GM12878 (cell line): ENCODE measurements at regions of chrX and their contacts with region 1.

Region 1: DNA sequence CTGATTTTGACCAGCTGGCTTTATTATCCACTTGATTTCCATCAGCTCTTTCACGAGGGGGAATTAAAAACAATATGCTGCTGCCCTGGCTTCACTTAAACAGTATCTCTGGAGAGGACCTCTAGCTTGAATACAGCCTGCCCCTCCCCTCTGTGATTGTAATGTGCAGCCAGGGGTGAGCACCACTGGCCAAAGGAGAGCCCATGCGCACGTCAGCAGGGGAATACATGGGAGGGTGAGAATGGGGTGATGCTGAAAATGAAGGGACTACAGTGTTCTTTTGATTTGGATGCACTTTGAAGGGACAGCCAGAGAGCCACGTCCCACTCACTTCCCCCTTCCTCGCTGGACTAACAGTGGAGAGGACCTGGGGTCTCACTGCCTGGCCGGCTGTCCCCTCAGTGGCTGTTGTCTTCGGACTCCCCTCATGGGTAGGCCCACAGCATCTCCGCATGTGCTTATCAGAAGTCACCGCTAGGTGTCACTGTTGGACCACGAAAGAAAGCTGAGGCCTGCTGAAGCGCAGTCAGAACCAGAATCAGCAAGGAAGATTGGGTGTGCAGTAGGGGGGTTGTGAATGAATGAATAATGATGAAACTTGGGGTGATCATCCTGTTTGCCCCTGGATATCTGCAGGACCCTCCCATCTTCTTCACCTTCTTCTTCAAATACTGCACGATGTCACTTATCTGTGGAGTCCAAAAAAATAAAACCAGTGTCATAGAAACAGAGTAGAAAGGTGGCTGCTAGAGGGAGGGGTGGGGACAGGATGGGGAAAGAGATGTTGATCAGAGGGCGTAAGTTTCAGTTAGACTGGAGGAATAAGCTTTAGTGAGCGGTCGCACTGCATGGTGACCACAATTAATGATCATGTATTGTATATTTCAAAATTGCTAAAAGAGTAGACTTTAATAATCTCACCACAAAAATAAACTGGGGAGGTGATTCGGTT is 32.8 kb downstream of the CLCN4 start:
- DNase-seq: no peak
- ATAC-seq: peak; percentile 98
- H3K4me3 ChIP-seq: no peak overlapping the region
- H3K27ac ChIP-seq: no peak overlapping the region
- H3K4me1 ChIP-seq: no peaks in the 10 kb centered on the region
- H3K27me3 ChIP-seq: no peaks in the 10 kb centered on the region; a peak in 1 of 4 replicates
- CTCF ChIP-seq: peak; percentile 74 to 94 (median 81)
- EP300 ChIP-seq: no peak
- POLR2A ChIP-seq: no peak
- RAD21 ChIP-seq: peak; percentile 93

Region 2: GRCh38 chrX:9988762-9989161 is 200.8 kb before region 1 on chrX:
- CTCF ChIA-PET with region 1: interaction called, 10 read pairs
- POLR2A ChIA-PET with region 1: no interaction called
- RAD21 ChIA-PET with region 1: no interaction called
- SMC1A ChIA-PET with region 1: no interaction called
- in situ Hi-C with region 1: no loop called
- intact Hi-C with region 1: no loop called
- DNase-seq: no peak
- ATAC-seq: peak; percentile 52
- H3K4me3 ChIP-seq: no peak overlapping the region
- H3K27ac ChIP-seq: no peak overlapping the region
- H3K4me1 ChIP-seq: no peaks in the 10 kb centered on the region
- H3K27me3 ChIP-seq: no peaks in the 10 kb centered on the region
- CTCF ChIP-seq: peak; percentile 43 to 71 (median 44); a peak in 4 of 6 replicates
- EP300 ChIP-seq: no peak
- POLR2A ChIP-seq: no peak
- RAD21 ChIP-seq: peak; percentile 69

Region 3: DNA sequence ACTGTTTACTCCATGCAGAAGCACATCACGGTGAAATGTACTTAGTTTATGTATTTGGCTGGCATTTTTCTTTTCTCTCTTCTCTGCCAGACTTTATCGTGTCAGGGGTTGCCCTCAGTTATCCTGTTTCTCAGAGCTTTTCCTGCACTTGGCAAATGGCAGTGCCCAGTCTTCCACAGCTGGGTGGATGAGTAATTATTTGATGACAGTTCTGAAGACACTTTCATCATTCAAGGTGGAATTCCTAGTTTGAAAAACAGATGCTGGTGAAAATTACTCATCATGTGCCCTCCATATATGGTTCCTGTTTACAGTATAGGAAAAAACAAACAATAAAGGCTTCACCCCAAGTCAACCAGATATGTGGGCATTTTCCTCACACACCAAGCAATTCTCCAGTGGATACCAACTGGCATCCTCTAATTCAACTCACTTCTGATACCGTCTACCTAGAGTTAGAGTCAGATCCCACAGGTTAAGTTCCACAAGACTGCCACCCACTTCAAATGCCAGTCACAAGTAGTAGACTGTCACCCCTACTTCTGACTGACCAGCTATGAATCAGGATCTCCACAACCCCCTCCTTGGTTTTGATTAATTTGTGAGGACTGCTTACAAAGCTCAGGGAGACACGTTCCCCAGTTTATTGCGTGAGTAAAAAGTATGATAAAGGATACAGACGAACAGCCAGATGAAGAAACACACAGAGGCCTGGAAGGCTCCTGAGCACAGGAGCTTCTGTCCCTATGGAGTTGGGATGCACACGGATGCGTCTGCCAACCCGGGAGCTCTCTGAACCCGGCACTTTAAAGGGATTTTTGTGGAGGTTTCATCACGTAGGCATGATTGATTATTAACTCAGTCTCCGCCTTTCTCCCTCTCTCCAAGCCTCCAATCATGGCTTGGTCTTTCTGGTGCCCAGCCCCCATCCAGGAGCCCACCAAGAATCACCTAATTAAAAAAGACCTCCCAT is 149.5 kb before region 1 on chrX:
- CTCF ChIA-PET with region 1: no interaction called
- POLR2A ChIA-PET with region 1: no interaction called
- RAD21 ChIA-PET with region 1: no interaction called
- SMC1A ChIA-PET with region 1: no interaction called
- in situ Hi-C with region 1: no loop called
- intact Hi-C with region 1: no loop called
- DNase-seq: no peak
- ATAC-seq: no peak
- H3K4me3 ChIP-seq: no peak overlapping the region
- H3K27ac ChIP-seq: no peak overlapping the region
- H3K4me1 ChIP-seq: no peaks in the 10 kb centered on the region
- H3K27me3 ChIP-seq: no peaks in the 10 kb centered on the region; a peak in 1 of 4 replicates
- CTCF ChIP-seq: no peak
- EP300 ChIP-seq: no peak
- POLR2A ChIP-seq: no peak
- RAD21 ChIP-seq: no peak

Region 4: GRCh38 chrX:10208281-10208856 is 18.8 kb after region 1 on chrX:
- CTCF ChIA-PET with region 1: interaction called, 20 read pairs
- POLR2A ChIA-PET with region 1: no interaction called
- RAD21 ChIA-PET with region 1: interaction called, 6 read pairs
- SMC1A ChIA-PET with region 1: interaction called, 5 read pairs
- in situ Hi-C with region 1: no loop called
- intact Hi-C with region 1: no loop called
- DNase-seq: no peak
- ATAC-seq: no peak
- H3K4me3 ChIP-seq: no peak overlapping the region
- H3K27ac ChIP-seq: no peak overlapping the region
- H3K4me1 ChIP-seq: no peaks in the 10 kb centered on the region
- H3K27me3 ChIP-seq: no peaks in the 10 kb centered on the region
- CTCF ChIP-seq: no peak
- EP300 ChIP-seq: no peak
- POLR2A ChIP-seq: no peak
- RAD21 ChIP-seq: no peak

Region 5: DNA sequence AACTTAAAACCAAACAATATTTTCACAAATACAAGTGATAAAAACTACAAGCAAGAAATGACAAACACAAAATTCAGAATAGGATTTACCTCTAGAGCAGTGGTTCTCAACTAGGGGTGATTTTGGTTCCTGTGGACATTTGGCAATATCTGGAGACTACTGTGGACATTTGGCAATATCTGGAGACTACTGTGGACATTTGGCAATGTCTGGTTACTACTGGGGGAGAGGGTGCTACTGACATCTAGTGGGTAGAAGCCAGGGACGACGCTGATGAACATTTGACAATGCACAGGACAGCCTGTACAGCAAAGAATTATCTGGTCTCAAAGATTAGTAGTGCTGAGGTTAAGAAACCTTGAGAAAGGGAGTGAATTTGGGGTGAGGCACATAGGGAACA is 137.0 kb after region 1 on chrX:
- CTCF ChIA-PET with region 1: interaction called, 6 read pairs
- POLR2A ChIA-PET with region 1: no interaction called
- RAD21 ChIA-PET with region 1: interaction called, 4 read pairs
- SMC1A ChIA-PET with region 1: interaction called, 3 read pairs
- in situ Hi-C with region 1: loop called (anchors 10 kb)
- intact Hi-C with region 1: loop called (anchors 1 kb)
- DNase-seq: no peak
- ATAC-seq: peak; percentile 80
- H3K4me3 ChIP-seq: no peak overlapping the region
- H3K27ac ChIP-seq: no peak overlapping the region
- H3K4me1 ChIP-seq: no peaks in the 10 kb centered on the region
- H3K27me3 ChIP-seq: no peaks in the 10 kb centered on the region; a peak in 2 of 4 replicates
- CTCF ChIP-seq: peak; percentile 11 to 36 (median 21); a peak in 2 of 6 replicates
- EP300 ChIP-seq: no peak
- POLR2A ChIP-seq: no peak
- RAD21 ChIP-seq: peak; percentile 49

Region 6: GRCh38 chrX:10597871-10598270 is 408.3 kb after region 1 on chrX:
- CTCF ChIA-PET with region 1: interaction called, 93 read pairs
- POLR2A ChIA-PET with region 1: no interaction called
- RAD21 ChIA-PET with region 1: interaction called, 33 read pairs
- SMC1A ChIA-PET with region 1: interaction called, 51 read pairs
- in situ Hi-C with region 1: no loop called
- intact Hi-C with region 1: loop called (anchors 1 kb)
- DNase-seq: no peak
- ATAC-seq: peak; percentile 81
- H3K4me3 ChIP-seq: no peak overlapping the region
- H3K27ac ChIP-seq: no peak overlapping the region
- H3K4me1 ChIP-seq: no peaks in the 10 kb centered on the region
- H3K27me3 ChIP-seq: no peaks in the 10 kb centered on the region
- CTCF ChIP-seq: peak; percentile 56 to 59 (median 56); a peak in 5 of 6 replicates
- EP300 ChIP-seq: no peak
- POLR2A ChIP-seq: no peak
- RAD21 ChIP-seq: peak; percentile 52

Region 7: DNA sequence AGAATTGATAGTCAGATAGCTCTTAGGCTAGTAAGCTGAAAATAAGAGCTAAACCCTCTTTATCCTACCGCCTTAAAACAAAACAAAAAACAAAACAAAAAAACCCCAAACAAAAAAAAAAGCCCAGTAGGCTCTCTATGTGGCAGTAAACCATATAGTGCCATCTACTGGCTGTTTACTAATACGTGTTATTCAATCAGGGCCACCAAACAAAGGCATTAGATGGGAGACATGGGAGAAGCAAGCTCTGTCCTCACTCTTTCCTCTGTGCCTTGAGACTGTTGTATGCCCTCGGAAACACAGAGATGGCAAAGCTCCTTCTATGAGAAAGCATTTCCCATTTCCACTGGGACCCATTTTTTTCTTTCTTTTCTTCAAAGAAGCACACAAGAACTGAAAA is 579.6 kb after region 1 on chrX:
- CTCF ChIA-PET with region 1: interaction called, 24 read pairs
- POLR2A ChIA-PET with region 1: no interaction called
- RAD21 ChIA-PET with region 1: interaction called, 15 read pairs
- SMC1A ChIA-PET with region 1: interaction called, 9 read pairs
- in situ Hi-C with region 1: no loop called
- intact Hi-C with region 1: loop called (anchors 2 kb)
- DNase-seq: no peak
- ATAC-seq: peak; percentile 90
- H3K4me3 ChIP-seq: no peak overlapping the region
- H3K27ac ChIP-seq: no peak overlapping the region
- H3K4me1 ChIP-seq: no peaks in the 10 kb centered on the region
- H3K27me3 ChIP-seq: no peaks in the 10 kb centered on the region
- CTCF ChIP-seq: peak; percentile 55 to 56 (median 55)
- EP300 ChIP-seq: no peak
- POLR2A ChIP-seq: no peak
- RAD21 ChIP-seq: peak; percentile 44

Region 8: DNA sequence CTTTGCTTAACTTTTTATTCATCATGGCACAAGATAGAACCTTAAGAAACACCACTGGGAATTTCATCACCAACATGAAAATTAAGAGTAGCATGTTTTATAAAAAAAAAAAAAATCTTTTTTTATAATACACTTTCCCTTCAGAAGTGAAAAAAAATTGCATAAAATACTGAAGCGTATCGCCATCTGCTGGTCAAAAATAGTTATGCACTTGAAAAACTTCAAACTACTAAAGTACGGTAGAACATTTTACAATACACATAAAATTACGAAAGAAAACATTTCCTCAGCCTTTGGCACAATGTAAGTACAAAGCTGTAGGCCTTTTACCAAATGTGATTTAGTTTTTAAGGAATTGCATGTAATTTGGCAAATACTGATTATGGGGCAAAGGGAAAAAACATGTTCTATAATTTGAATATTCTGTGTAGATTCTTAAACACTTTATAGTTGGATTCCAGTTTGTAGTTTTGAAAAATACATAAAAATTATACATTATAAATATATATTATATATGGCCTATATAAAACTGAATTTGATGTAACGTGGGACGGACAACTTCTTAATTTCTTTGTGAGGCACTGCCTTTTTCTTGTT is 948.0 kb after region 1 on chrX:
- CTCF ChIA-PET with region 1: interaction called, 62 read pairs
- POLR2A ChIA-PET with region 1: no interaction called
- RAD21 ChIA-PET with region 1: interaction called, 11 read pairs
- SMC1A ChIA-PET with region 1: interaction called, 23 read pairs
- in situ Hi-C with region 1: loop called (anchors 5 kb)
- intact Hi-C with region 1: loop called (anchors 1 kb)
- DNase-seq: no peak
- ATAC-seq: no peak
- H3K4me3 ChIP-seq: no peak overlapping the region
- H3K27ac ChIP-seq: no peak overlapping the region
- H3K4me1 ChIP-seq: no peaks in the 10 kb centered on the region
- H3K27me3 ChIP-seq: no peaks in the 10 kb centered on the region
- CTCF ChIP-seq: peak; percentile 52 to 60 (median 54)
- EP300 ChIP-seq: no peak
- POLR2A ChIP-seq: no peak
- RAD21 ChIP-seq: peak; percentile 55